H1 (cell line): ENCODE measurements at regions of chr6 and their contacts with region 1.

Region 1: GRCh38 chr6:138509371-138509770 is 10.1 kb upstream of the NHSL1 start:
- DNase-seq: no peak
- H3K4me3 ChIP-seq: no peak overlapping the region
- H3K27ac ChIP-seq: no peak overlapping the region
- H3K4me1 ChIP-seq: peaks cover 0 to 7% (median 2%) of the 10 kb centered on the region in 4 experiments; a peak in 3 of 7 replicates
- H3K27me3 ChIP-seq: peaks cover 0 to 1% (median 0%) of the 10 kb centered on the region in 4 experiments; a peak in 1 of 7 replicates
- CTCF ChIP-seq: peak; percentile 30 to 78 (median 50)
- EP300 ChIP-seq: no peak
- POLR2A ChIP-seq: no peak
- RAD21 ChIP-seq: peak; percentile 83 to 84

Region 2: DNA sequence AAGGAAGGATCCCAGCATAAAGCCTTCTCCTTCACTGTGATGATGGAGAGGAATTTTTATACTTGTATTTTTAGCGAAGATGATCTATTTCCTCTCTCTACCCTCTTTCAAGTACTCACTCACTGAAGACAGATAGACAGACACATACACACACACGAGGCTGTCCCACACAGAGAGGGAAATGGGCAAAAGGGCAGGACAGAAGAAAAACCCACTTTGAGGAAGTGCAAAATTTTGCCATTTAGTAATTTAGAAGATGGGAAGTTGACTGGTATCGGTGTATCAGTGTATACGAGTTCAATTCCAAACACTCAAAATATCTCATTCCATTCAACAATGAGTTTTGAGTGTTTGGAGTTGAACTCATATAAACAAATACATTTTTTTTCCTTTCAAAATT is 74.4 kb before region 1 on chr6:
- CTCF ChIA-PET with region 1: interaction called, 192 read pairs
- POLR2A ChIA-PET with region 1: no interaction called
- DNase-seq: no peak
- H3K4me3 ChIP-seq: no peak overlapping the region
- H3K27ac ChIP-seq: no peak overlapping the region
- H3K4me1 ChIP-seq: no peaks in the 10 kb centered on the region; a peak in 2 of 7 replicates
- H3K27me3 ChIP-seq: no peaks in the 10 kb centered on the region
- CTCF ChIP-seq: no peak
- EP300 ChIP-seq: no peak
- POLR2A ChIP-seq: no peak
- RAD21 ChIP-seq: no peak

Region 3: GRCh38 chr6:138450445-138450844 is 58.9 kb before region 1 on chr6:
- CTCF ChIA-PET with region 1: interaction called, 20 read pairs
- POLR2A ChIA-PET with region 1: no interaction called
- DNase-seq: no peak
- H3K4me3 ChIP-seq: no peak overlapping the region
- H3K27ac ChIP-seq: no peak overlapping the region
- H3K4me1 ChIP-seq: peaks cover 0 to 3% (median 0%) of the 10 kb centered on the region in 4 experiments; a peak in 2 of 7 replicates
- H3K27me3 ChIP-seq: no peaks in the 10 kb centered on the region
- CTCF ChIP-seq: no peak
- EP300 ChIP-seq: no peak
- POLR2A ChIP-seq: no peak
- RAD21 ChIP-seq: no peak

Region 4: DNA sequence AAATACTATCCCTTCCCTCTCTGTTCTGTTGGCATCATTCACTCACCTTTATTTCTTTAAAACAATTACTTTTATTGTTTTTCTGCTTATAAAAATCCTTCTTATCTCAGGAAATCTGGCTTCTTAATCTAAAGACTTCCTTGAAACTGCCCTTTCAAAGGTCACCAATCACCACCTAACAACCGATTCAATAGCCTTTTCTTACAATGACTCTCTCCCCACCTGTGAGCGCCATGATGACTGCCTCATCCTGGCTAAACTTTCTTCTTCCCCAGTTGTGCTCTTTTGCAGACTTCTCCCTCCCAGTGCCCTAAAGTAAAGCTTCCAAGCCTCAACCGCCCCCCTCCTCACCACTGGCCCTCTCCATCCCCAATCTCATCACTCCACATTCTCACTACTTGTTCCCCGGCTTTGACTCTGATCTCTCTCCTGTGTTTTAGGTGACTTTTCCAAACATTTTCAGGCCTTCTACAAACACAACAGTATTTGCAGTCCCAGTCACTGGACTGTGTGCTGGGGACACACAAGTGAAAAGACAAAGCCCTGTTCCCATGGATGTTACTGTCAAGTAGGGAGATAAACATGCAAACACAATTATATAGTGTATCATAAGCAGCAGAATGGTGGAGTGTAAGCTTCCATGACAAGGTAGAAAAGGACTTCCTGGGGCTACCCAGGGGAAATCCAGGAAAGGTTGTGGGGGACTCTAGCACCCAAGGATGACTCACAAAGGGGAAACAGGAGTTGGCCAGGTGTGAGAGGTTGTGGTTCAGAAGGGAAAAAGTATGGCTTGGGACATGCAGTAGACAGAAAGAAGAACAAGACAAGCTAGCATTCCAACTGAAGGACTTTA is 22.9 kb before region 1 on chr6:
- CTCF ChIA-PET with region 1: interaction called, 14 read pairs
- POLR2A ChIA-PET with region 1: no interaction called
- DNase-seq: peak in 1 of 2 experiments; percentile 38
- H3K4me3 ChIP-seq: no peak overlapping the region
- H3K27ac ChIP-seq: peak overlapping the region; percentile 66
- H3K4me1 ChIP-seq: peaks cover 0 to 24% (median 17%) of the 10 kb centered on the region in 4 experiments; a peak in 4 of 7 replicates
- H3K27me3 ChIP-seq: no peaks in the 10 kb centered on the region
- CTCF ChIP-seq: no peak
- EP300 ChIP-seq: no peak
- POLR2A ChIP-seq: no peak
- RAD21 ChIP-seq: no peak